GM10248 (cell line): ENCODE measurements at regions of chr2 and their contacts with region 1.

Region 1: GRCh38 chr2:135997380-135997779 is 12.0 kb upstream of the DARS1 start:
- DNase-seq: peak; percentile 37
- CTCF ChIP-seq: no peak

Region 2: DNA sequence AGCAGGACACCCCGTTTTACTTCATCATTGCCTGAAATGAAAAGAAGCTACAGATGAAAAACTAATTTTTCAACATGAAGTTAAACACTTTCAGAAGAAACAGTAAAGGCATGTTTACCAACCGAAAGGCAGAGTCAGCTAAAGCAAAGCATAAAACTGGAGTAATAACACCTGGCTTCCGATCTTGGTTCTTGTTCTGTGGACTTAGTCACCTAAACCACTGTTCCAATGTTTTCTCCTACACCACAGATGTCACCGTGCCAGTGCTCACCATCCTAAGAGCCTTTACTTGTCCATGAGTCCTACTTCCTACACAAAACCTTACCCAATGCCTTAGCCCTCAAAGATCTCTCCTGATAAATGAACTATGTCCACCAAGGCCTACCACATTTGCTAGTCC is 134.7 kb before region 1 on chr2:
- CTCF ChIA-PET with region 1: no interaction called
- POLR2A ChIA-PET with region 1: no interaction called
- DNase-seq: no peak
- CTCF ChIP-seq: no peak

Region 3: DNA sequence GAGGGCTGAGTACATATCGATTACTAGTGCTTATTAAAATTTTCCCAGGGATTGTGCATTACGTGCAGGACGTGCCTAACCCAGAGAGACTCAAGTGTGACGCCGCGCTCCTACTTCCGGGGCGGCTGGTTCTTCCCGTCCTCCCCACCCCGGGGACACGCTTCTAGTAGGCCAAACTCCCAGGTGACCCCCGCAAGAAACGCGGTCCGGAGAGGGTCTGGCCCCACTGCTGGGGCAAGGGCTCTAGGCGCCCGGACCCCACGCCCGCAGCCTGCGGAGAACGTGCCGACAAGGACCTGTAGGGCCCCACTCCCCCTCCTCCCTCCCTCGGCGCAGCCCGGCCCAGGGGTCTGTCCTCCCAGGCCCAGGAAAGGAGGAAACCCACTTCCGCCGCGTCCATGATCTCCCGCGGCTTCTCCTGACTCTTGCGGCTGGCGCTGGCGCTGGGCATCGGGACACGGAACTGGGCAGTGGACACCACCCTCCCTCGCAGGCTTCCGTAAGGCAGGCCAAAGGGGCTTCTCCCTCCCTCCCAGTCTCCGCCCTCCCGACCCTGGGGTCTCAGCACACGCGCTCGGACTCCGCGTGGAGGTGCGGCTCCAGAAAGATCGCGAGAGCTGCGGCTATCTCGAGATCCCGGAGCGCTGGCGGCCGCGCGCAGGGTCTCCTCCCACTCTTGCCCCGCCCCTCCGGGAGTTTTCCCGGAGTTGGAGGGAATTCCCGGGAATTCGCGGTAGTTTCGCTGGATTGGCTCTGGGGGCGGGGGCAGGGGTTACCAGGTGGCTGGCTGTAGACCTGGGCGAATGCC is 12.2 kb before region 1 on chr2 and contains the start of gene DARS1:
- CTCF ChIA-PET with region 1: interaction called, 25 read pairs
- POLR2A ChIA-PET with region 1: interaction called, 3 read pairs
- DNase-seq: peak; percentile 94
- CTCF ChIP-seq: no peak

Region 4: DNA sequence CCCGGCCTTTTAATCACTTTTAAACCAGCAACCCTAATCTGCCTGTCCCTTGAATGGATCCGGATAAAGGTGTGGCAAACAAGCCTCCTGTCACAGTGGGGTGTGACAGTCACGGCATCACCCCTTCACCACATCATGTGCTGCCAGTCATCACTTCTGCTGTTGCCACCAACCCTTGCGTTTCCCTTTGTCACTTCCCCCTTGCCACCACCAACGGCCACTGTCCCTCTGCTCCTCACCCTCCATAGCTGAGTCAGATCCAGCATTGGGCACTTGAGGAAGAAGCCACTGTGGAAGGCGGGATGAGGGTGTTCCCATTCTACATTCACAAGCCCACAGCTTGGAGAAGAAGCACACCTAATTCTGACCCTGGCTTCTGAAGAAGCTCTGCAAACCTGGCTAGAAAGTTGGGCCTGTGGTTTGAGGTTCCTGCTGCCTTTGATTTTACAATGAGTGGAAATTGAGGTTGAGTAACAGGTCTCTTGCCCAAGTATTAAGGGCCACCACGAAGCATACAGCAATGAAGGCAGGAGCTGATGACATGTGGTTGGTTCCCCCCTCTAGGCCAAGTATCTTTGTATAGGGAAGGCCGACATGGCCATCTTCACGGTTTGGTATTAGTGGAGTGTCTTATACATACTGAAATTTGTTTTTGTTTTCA is 11.0 kb after region 1 on chr2:
- CTCF ChIA-PET with region 1: interaction called, 10 read pairs
- POLR2A ChIA-PET with region 1: no interaction called
- DNase-seq: no peak
- CTCF ChIP-seq: no peak